IMR-90 (cell line): ENCODE measurements at regions of chr18 and their contacts with region 1.

Region 1: DNA sequence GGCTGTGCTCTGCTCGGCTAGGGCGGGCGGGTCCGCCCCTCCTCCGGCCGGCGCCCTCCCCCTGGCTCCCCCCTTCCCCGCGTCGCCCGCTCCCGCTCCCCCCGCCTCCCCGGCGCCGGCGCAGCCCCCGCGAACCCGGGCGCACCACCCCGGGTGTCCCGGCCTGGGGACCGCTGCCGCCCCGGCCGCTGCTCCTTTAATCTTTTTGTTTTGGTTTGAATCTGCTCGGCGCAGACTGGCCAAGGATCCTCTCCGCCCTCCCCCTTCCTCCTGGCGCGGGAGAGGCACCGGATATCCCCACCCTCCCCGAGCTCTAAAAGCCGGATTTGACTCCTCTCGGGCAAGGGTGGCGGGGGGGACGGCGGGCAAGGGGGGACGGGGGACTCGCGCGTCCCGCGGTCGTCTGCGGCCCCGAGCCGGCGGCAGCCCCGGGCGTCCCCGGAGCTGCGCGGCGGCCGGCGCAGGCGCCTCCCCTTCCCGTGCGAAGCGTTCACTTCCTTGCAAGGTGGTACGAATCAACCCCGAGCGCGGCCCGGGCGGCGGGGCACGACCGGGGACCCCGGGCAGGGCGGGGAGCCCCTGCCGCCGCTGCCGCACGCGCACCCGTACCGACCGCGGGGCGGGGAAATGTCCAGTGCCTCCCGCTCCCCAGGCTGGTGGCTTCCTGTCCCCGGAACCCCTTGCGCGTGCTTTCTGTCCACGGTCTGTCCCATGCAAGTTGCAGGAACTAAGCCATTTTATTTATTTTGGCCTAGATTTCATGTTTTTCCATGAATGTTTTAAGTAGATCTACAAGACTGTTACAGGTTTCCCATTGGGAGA is at the start of gene PTGR3:
- DNase-seq: peak; percentile 73
- ATAC-seq: peak; percentile 57
- H3K4me3 ChIP-seq: peak within 1 kb of the TSS; percentile 90
- H3K27ac ChIP-seq: peak within 1 kb of the TSS; percentile 98
- H3K4me1 ChIP-seq: peaks cover 5% of the 10 kb centered on the region
- H3K27me3 ChIP-seq: no peaks in the 10 kb centered on the region
- CTCF ChIP-seq: no peak
- POLR2A ChIP-seq: no peak; the same call in 1 of the 2 replicates
- RAD21 ChIP-seq: no peak
- total RNA-seq, gene PTGR3: 16.1 and 16.9 TPM in 2 replicates

Region 2: GRCh38 chr18:74731097-74731496 is 478.2 kb before region 1 on chr18:
- CTCF ChIA-PET with region 1: no interaction called
- POLR2A ChIA-PET with region 1: no interaction called
- dilution Hi-C with region 1: no loop called
- in situ Hi-C with region 1: no loop called
- intact Hi-C with region 1: no loop called
- DNase-seq: peak; percentile 86
- ATAC-seq: peak; percentile 92
- H3K4me3 ChIP-seq: no peak overlapping the region
- H3K27ac ChIP-seq: peak overlapping the region; percentile 19; the same call in 1 of the 2 replicates
- H3K4me1 ChIP-seq: peaks cover 3% of the 10 kb centered on the region
- H3K27me3 ChIP-seq: no peaks in the 10 kb centered on the region
- CTCF ChIP-seq: no peak
- POLR2A ChIP-seq: no peak
- RAD21 ChIP-seq: no peak

Region 3: DNA sequence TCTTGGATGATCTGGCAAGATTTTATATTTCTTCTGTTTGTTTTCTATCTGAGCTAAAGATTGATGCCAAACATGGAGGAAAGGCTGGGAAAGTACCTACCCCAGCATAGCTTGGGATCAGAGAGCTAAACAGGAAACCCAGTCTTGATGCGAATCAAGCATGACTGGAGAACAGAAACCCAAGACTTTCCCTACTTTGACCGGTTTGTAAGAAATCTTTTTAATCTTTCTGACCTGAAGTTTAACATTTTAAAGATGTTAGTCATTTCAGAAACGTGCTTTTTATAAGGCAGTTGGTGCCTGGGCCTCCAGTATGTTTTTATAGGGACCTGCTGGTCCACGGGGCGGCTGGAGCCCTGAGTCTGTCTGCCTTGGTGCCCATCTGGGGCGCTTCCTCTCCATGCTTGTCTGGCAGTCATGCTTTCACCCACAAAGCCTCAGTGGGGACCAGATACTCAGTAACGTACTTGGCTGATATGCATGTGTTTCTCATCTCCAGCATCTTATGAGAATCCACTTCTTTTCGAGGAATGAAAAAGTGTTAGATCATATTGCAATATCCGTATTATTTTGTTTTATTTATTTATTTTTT is 266.9 kb before region 1 on chr18:
- CTCF ChIA-PET with region 1: no interaction called
- POLR2A ChIA-PET with region 1: no interaction called
- dilution Hi-C with region 1: no loop called
- in situ Hi-C with region 1: no loop called
- intact Hi-C with region 1: loop called (anchors 10 kb)
- DNase-seq: peak; percentile 75
- ATAC-seq: peak; percentile 25; the same call in 1 of the 2 replicates
- H3K4me3 ChIP-seq: no peak overlapping the region
- H3K27ac ChIP-seq: no peak overlapping the region
- H3K4me1 ChIP-seq: peaks cover 10% of the 10 kb centered on the region
- H3K27me3 ChIP-seq: no peaks in the 10 kb centered on the region
- CTCF ChIP-seq: no peak
- POLR2A ChIP-seq: no peak
- RAD21 ChIP-seq: no peak

Region 4: GRCh38 chr18:75041586-75041985 is 167.8 kb before region 1 on chr18:
- CTCF ChIA-PET with region 1: no interaction called
- POLR2A ChIA-PET with region 1: no interaction called
- dilution Hi-C with region 1: no loop called
- in situ Hi-C with region 1: no loop called
- intact Hi-C with region 1: no loop called
- DNase-seq: peak; percentile 50
- ATAC-seq: 0 out of 2 replicates have a peak, but pooled peaks have one; percentile 33
- H3K4me3 ChIP-seq: no peak overlapping the region
- H3K27ac ChIP-seq: no peak overlapping the region
- H3K4me1 ChIP-seq: peaks cover 4% of the 10 kb centered on the region
- H3K27me3 ChIP-seq: no peaks in the 10 kb centered on the region
- CTCF ChIP-seq: peak; percentile 42
- POLR2A ChIP-seq: no peak
- RAD21 ChIP-seq: peak; percentile 48

Region 5: GRCh38 chr18:75280427-75281280 is 71.3 kb after region 1 on chr18:
- CTCF ChIA-PET with region 1: no interaction called
- POLR2A ChIA-PET with region 1: no interaction called
- dilution Hi-C with region 1: no loop called
- in situ Hi-C with region 1: no loop called
- intact Hi-C with region 1: loop called (anchors 5 kb)
- DNase-seq: peak; percentile 5
- ATAC-seq: 0 out of 2 replicates have a peak, but pooled peaks have one; percentile 28
- H3K4me3 ChIP-seq: no peak overlapping the region
- H3K27ac ChIP-seq: no peak overlapping the region
- H3K4me1 ChIP-seq: 0 out of 2 replicates have a peak, but pooled peaks cover 1% of the 10 kb centered on the region
- H3K27me3 ChIP-seq: no peaks in the 10 kb centered on the region
- CTCF ChIP-seq: no peak
- POLR2A ChIP-seq: no peak
- RAD21 ChIP-seq: no peak

Region 6: GRCh38 chr18:75582406-75582821 is 373.1 kb after region 1 on chr18:
- CTCF ChIA-PET with region 1: no interaction called
- POLR2A ChIA-PET with region 1: no interaction called
- dilution Hi-C with region 1: no loop called
- in situ Hi-C with region 1: no loop called
- intact Hi-C with region 1: loop called (anchors 5 kb)
- DNase-seq: peak; percentile 76
- ATAC-seq: peak; percentile 86
- H3K4me3 ChIP-seq: no peak overlapping the region
- H3K27ac ChIP-seq: peak overlapping the region; percentile 92; the same call in 1 of the 2 replicates
- H3K4me1 ChIP-seq: peaks cover 11% of the 10 kb centered on the region
- H3K27me3 ChIP-seq: no peaks in the 10 kb centered on the region
- CTCF ChIP-seq: no peak
- POLR2A ChIP-seq: no peak
- RAD21 ChIP-seq: no peak

Region 7: GRCh38 chr18:76259096-76259495 is 1049.8 kb after region 1 on chr18:
- CTCF ChIA-PET with region 1: no interaction called
- POLR2A ChIA-PET with region 1: no interaction called
- dilution Hi-C with region 1: no loop called
- in situ Hi-C with region 1: no loop called
- intact Hi-C with region 1: loop called (anchors 5 kb)
- DNase-seq: no peak
- ATAC-seq: peak; percentile 16; the same call in 1 of the 2 replicates
- H3K4me3 ChIP-seq: no peak overlapping the region
- H3K27ac ChIP-seq: no peak overlapping the region
- H3K4me1 ChIP-seq: peaks cover 2% of the 10 kb centered on the region; the same call in 1 of the 2 replicates
- H3K27me3 ChIP-seq: peaks cover 7% of the 10 kb centered on the region
- CTCF ChIP-seq: no peak
- POLR2A ChIP-seq: no peak
- RAD21 ChIP-seq: no peak